AG04449 (cell line): ENCODE measurements at regions of chr6 and their contacts with region 1.

Region 1: DNA sequence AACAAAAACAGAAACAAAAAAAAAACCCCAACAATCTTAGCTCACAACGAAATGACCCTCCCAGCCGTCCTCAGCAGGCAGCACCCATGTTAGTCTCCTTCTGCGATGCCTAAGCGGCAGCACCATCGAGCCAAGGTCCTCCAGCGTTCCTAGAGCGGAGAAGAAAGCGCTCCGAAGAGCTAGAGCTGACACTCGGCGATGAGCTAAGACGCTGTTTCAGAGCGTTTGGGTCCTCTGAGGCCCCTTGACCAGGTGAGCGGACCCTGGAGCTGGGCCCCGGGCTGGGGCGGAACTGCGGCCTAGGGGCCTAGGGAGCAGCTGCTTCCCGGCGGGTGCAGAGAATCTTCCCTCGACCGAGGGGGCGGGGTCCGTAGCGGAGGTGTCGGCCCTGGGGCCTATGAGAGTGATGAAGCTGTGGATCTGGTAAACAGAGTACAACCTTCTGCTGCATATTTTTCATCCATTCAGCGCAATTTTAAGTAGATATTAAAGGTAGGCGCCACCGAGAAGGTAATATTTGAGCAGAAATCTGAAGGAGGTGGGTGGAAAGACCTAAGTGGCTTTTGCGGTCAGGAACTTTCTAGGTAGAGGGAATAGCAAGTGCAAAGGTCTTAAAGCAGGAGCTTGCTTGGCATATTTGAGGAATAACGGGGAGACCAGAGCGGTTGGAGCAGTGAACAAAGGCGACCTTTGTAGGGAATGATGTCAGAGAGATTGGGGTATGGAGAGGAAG is at the start of gene ZSCAN26:
- DNase-seq: peak; percentile 46
- H3K4me3 ChIP-seq: peak within 1 kb of the TSS; percentile 73
- CTCF ChIP-seq: no peak

Region 2: DNA sequence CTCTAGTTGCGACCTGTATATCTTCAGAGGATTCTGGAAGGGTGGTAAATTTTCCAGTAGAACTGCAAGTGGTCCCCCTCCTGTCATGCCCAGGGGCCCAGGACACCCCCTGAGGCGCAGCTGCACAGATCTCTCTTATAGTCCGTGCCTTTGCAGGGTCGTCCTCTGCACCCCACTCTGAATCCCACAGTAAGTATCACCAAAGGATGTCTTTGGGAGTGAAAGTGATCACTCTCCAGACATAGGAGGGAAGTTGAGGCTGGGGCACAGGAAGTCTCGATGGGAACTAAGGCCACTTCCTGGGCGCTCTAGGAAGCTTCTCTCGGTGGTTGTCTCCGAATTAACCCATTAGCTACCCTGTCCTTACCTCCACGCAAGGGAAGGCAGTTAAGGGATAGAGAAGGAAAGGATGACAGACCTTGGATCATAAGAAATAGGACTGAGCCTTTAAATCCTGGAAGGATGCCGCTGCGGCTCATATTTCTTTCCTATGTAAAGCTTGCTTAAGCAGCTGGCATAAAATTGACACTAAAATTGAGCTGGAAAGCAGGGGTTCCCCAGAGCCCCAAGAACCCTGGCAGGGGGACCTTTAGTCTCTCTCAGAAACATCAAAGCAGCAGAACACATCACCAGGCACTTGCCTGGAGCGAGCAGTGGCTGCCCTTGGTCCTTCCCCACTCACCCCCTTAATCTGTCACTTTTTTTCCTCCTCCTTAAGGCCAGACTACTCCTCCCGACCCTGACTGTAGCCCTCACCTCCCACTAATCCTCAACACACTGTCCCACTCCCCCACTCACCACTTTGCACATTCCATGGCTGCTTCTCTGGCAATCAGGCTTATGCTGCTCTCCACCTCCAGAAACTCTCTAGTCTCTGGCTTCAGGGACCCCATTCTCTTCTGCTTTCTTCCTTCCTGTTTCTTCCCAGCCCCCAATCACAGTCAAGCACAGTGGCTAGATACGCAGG is 14.8 kb before region 1 on chr6 and contains the start of gene ZKSCAN4:
- CTCF ChIA-PET with region 1: interaction called, 5 read pairs
- POLR2A ChIA-PET with region 1: interaction called, 17 read pairs
- DNase-seq: peak; percentile 58
- H3K4me3 ChIP-seq: peak within 1 kb of the TSS; percentile 85
- CTCF ChIP-seq: no peak

Region 3: GRCh38 chr6:28281288-28282064 is 14.3 kb after region 1 on chr6 and contains the start of gene PGBD1:
- CTCF ChIA-PET with region 1: interaction called, 4 read pairs
- POLR2A ChIA-PET with region 1: interaction called, 11 read pairs
- DNase-seq: peak; percentile 9
- H3K4me3 ChIP-seq: peak within 1 kb of the TSS; percentile 71
- CTCF ChIP-seq: no peak